ENCODE measurements at regions of chr6 and their contacts with region 1.

Region 1: GRCh38 chr6:87701676-87702588 is at the start of gene AKIRIN2:
- DNase-seq: peak; percentile 97
- ATAC-seq: peak; percentile 78
- H3K4me3 Mint-ChIP-seq: peak within 1 kb of the TSS; percentile 97
- H3K27ac Mint-ChIP-seq: peak within 1 kb of the TSS; percentile 97
- H3K4me1 Mint-ChIP-seq: peaks cover 53% of the 10 kb centered on the region
- H3K27me3 Mint-ChIP-seq: no peaks in the 10 kb centered on the region
- CTCF ChIP-seq: no peak
- total RNA-seq, gene AKIRIN2: 61.9 and 76.4 TPM in 2 replicates

Region 2: DNA sequence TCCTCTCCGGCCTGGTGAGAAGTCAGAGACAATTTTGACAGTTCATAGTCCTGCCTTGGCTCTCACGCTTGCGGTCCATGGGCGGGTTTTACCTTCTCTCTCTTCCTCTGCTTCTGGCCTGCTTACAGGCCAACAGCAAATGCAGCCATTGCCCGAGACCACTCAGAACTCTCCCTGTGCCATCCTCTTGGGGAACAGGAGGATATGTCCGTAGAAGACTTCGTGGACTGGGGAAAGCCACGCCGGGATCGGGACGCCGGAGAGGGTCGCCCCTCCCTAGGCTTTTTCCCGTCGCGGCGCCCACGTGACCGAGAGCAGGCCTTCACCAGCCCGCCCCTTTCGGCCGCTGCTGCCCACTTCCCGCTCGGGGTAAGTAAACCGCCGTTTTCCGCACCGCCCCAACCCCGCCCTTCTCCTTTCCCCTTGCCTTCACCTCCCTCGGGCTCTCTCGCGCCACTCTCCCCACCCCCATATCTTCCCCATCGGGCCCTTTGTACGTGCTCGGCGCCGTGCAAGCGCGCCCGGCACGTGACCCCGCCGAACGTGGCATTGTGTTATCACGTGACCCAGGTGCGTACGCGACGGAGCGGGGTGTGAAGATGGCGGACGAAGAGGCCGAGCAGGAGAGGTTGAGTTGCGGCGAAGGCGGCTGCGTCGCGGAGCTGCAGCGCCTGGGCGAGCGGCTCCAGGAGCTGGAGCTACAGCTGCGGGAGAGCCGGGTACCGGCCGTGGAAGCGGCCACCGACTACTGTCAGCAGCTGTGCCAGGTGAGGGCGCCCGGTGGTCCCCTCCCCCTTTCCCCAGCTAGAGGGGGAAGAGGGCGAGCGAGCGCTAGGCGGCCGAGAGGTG is 546.7 kb before region 1 on chr6 and contains the start of gene ZNF292:
- CTCF ChIA-PET with region 1: no interaction called
- POLR2A ChIA-PET with region 1: no interaction called
- intact Hi-C with region 1: loop called (anchors 1 kb)
- DNase-seq: peak; percentile 94
- ATAC-seq: peak; percentile 85
- H3K4me3 Mint-ChIP-seq: peak within 1 kb of the TSS; percentile 91
- H3K27ac Mint-ChIP-seq: peak within 1 kb of the TSS; percentile 97
- H3K4me1 Mint-ChIP-seq: peaks cover 57% of the 10 kb centered on the region
- H3K27me3 Mint-ChIP-seq: no peaks in the 10 kb centered on the region
- CTCF ChIP-seq: no peak
- total RNA-seq, gene ZNF292: 54.8 and 66.6 TPM in 2 replicates

Region 3: GRCh38 chr6:87472525-87473418 is 229.2 kb before region 1 on chr6 and contains the start of gene SLC35A1:
- CTCF ChIA-PET with region 1: no interaction called
- POLR2A ChIA-PET with region 1: no interaction called
- intact Hi-C with region 1: loop called (anchors 1 kb)
- DNase-seq: peak; percentile 88
- ATAC-seq: peak; percentile 97
- H3K4me3 Mint-ChIP-seq: peak within 1 kb of the TSS; percentile 97
- H3K27ac Mint-ChIP-seq: peak within 1 kb of the TSS; percentile 98
- H3K4me1 Mint-ChIP-seq: peaks cover 12% of the 10 kb centered on the region
- H3K27me3 Mint-ChIP-seq: peaks cover 6% of the 10 kb centered on the region
- CTCF ChIP-seq: no peak
- total RNA-seq, gene SLC35A1: 7.5 and 8.7 TPM in 2 replicates

Region 4: GRCh38 chr6:87574292-87574691 is 127.6 kb before region 1 on chr6:
- CTCF ChIA-PET with region 1: no interaction called
- POLR2A ChIA-PET with region 1: no interaction called
- intact Hi-C with region 1: no loop called
- DNase-seq: no peak
- ATAC-seq: no peak
- H3K4me3 Mint-ChIP-seq: no peak overlapping the region
- H3K27ac Mint-ChIP-seq: no peak overlapping the region
- H3K4me1 Mint-ChIP-seq: peaks cover 43% of the 10 kb centered on the region
- H3K27me3 Mint-ChIP-seq: no peaks in the 10 kb centered on the region
- CTCF ChIP-seq: no peak

Region 5: GRCh38 chr6:87723170-87724078 is 21.5 kb after region 1 on chr6:
- CTCF ChIA-PET with region 1: no interaction called
- POLR2A ChIA-PET with region 1: interaction called, 16 read pairs
- intact Hi-C with region 1: loop called (anchors 1 kb)
- DNase-seq: no peak
- ATAC-seq: no peak
- H3K4me3 Mint-ChIP-seq: no peak overlapping the region
- H3K27ac Mint-ChIP-seq: no peak overlapping the region
- H3K4me1 Mint-ChIP-seq: peaks cover 32% of the 10 kb centered on the region
- H3K27me3 Mint-ChIP-seq: no peaks in the 10 kb centered on the region
- CTCF ChIP-seq: no peak

Region 6: GRCh38 chr6:87832025-87832825 is 130.3 kb after region 1 on chr6:
- CTCF ChIA-PET with region 1: interaction called, 6 read pairs
- POLR2A ChIA-PET with region 1: interaction called, 13 read pairs
- intact Hi-C with region 1: loop called (anchors 1 kb)
- DNase-seq: no peak
- ATAC-seq: peak; percentile 77
- H3K4me3 Mint-ChIP-seq: peak overlapping the region; percentile 85
- H3K27ac Mint-ChIP-seq: peak overlapping the region; percentile 78
- H3K4me1 Mint-ChIP-seq: peaks cover 11% of the 10 kb centered on the region
- H3K27me3 Mint-ChIP-seq: no peaks in the 10 kb centered on the region
- CTCF ChIP-seq: no peak

Region 7: GRCh38 chr6:88141561-88142296 is 439.8 kb after region 1 on chr6:
- CTCF ChIA-PET with region 1: interaction called, 4 read pairs
- POLR2A ChIA-PET with region 1: interaction called, 4 read pairs
- intact Hi-C with region 1: loop called (anchors 1 kb)
- DNase-seq: peak; percentile 33
- ATAC-seq: peak; percentile 91
- H3K4me3 Mint-ChIP-seq: peak overlapping the region; percentile 73
- H3K27ac Mint-ChIP-seq: peak overlapping the region; percentile 96
- H3K4me1 Mint-ChIP-seq: peaks cover 65% of the 10 kb centered on the region
- H3K27me3 Mint-ChIP-seq: no peaks in the 10 kb centered on the region
- CTCF ChIP-seq: no peak

Region 8: GRCh38 chr6:88238065-88238464 is 536.1 kb after region 1 on chr6:
- CTCF ChIA-PET with region 1: no interaction called
- POLR2A ChIA-PET with region 1: no interaction called
- intact Hi-C with region 1: loop called (anchors 5 kb)
- DNase-seq: no peak
- ATAC-seq: peak; percentile 82
- H3K4me3 Mint-ChIP-seq: no peak overlapping the region
- H3K27ac Mint-ChIP-seq: no peak overlapping the region
- H3K4me1 Mint-ChIP-seq: peaks cover 5% of the 10 kb centered on the region
- H3K27me3 Mint-ChIP-seq: no peaks in the 10 kb centered on the region
- CTCF ChIP-seq: no peak

Measured in activated B cell treated with CpG ODN at 0.5 μM for 24 hours (primary cell).